ENCODE measurements at regions of chr16 and their contacts with region 1.

Region 1: DNA sequence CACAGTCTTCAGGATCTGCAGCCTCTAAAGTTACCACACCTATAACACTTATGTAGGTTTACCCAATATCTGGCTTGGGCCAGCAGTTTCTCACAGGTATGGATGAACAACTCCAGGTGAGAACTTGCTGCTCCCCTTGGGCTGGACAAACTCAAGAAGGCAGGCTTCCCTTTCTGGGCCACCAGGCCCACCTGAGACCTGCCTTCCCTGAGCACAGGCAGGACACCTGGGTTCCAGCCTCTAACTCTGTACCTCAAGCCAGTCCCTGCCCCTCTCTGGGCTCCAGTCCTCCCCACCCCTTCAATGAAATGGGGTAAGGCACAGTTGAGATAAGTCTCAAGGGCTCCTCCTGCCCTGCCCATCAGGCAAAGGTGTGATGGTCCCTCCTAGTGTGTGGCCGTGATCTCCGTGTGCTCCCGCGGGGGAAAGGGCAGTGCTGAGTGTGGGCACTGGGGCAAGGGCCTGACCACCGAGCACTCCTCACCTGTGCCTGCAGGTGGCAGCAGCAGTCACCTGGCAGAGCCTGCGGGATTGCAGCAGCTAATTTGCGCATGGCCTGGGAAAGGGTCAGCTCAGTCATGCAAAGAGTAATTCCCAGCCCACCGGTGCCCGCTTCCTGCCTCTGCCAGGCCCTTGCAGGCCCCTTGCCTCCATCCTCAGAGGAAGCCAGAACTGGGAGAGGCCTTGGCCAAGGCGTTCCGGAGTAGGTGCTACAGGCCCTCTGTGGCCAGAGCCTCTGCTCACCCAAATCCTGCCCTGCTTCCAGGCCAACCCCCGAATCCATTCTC is 28.2 kb upstream of the ADGRG1 start:
- DNase-seq: peak; percentile 50
- H3K4me3 Mint-ChIP-seq: no peak overlapping the region
- H3K27ac Mint-ChIP-seq: peak overlapping the region; percentile 97
- H3K4me1 Mint-ChIP-seq: peaks cover 66% of the 10 kb centered on the region
- H3K27me3 Mint-ChIP-seq: peaks cover 4% of the 10 kb centered on the region

Region 2: DNA sequence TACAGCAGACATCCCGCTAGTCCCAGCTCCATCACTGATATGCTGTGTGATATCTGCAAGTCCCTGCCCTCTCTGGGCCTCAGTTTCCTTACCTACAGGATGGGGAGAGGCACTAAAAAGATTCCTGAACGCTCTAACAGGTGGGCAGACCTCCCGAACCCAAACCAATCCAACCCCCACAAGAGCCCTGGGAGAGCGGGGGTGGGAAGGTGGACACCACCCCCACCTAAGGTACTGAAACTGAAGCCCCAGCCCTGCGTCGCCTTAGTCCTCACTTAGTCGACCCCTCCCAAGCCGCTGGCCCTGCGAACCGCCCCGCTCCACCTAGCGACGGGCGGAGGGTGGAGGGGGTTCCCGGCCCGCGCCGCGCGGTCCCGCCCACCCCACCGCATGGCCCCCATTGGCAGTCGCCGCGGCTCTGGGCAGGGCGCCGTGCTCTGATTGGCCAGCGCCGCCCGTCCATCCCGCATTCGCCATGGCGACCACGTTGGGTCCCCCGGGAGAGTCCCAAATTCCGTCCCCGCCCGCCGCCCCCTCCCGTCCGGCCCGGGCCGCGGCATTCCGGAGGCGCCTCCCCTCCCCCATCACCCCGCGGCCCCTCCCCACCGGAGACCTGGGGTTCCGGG is 64.4 kb before region 1 on chr16:
- CTCF ChIA-PET with region 1: interaction called, 5 read pairs
- POLR2A ChIA-PET with region 1: interaction called, 15 read pairs
- DNase-seq: peak; percentile 95
- H3K4me3 Mint-ChIP-seq: peak overlapping the region; percentile 79
- H3K27ac Mint-ChIP-seq: peak overlapping the region; percentile 80
- H3K4me1 Mint-ChIP-seq: peaks cover 79% of the 10 kb centered on the region
- H3K27me3 Mint-ChIP-seq: no peaks in the 10 kb centered on the region

Region 3: GRCh38 chr16:57564571-57565270 is 35.5 kb before region 1 on chr16:
- CTCF ChIA-PET with region 1: no interaction called
- POLR2A ChIA-PET with region 1: no interaction called
- DNase-seq: no peak
- H3K4me3 Mint-ChIP-seq: no peak overlapping the region
- H3K27ac Mint-ChIP-seq: no peak overlapping the region
- H3K4me1 Mint-ChIP-seq: peaks cover 5% of the 10 kb centered on the region
- H3K27me3 Mint-ChIP-seq: no peaks in the 10 kb centered on the region

Region 4: GRCh38 chr16:57639172-57639887 is 39.1 kb after region 1 on chr16:
- CTCF ChIA-PET with region 1: interaction called, 4 read pairs
- POLR2A ChIA-PET with region 1: interaction called, 11 read pairs
- DNase-seq: no peak
- H3K4me3 Mint-ChIP-seq: no peak overlapping the region
- H3K27ac Mint-ChIP-seq: no peak overlapping the region
- H3K4me1 Mint-ChIP-seq: peaks cover 2% of the 10 kb centered on the region
- H3K27me3 Mint-ChIP-seq: peaks cover 41% of the 10 kb centered on the region